IMR-90 (cell line): ENCODE measurements at regions of chr15 and their contacts with region 1.

Region 1: DNA sequence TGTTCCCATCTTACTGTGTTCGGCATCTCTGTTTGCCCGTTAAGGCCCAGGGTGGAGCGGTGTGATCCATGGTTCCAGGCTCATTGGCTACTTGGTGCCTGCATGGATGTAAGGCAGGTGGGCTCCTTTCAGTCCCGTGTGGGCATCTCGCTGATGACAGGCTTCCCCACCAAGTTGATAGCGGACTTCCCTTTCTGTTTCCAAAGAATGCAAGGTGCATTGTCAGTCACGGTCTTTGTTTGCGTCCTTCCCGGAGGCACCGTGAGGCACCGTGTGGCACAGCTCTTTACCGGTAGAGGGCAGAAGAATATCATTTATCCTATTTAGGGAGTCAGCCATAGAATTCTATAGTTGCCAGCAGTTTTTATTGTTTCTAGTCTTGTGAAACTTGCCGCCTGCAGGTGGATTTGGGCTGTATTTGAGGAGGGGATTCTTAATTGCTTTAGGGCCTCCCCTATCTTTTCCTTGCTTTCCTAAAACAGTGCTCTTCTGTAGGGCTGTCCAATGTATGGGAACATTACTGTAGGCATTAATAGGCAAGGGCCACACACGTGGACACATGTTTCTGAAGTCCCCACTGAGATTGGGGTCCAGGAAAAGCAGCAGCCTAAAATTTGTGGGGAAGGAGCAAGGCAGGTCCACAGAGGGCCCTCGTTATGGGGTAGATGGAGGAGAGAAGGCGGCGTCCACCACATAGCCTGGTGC is 244.1 kb downstream of the SLCO3A1 start:
- DNase-seq: peak; percentile 46
- ATAC-seq: peak; percentile 98
- H3K4me3 ChIP-seq: no peak overlapping the region
- H3K27ac ChIP-seq: no peak overlapping the region
- H3K4me1 ChIP-seq: no peaks in the 10 kb centered on the region
- H3K27me3 ChIP-seq: no peaks in the 10 kb centered on the region
- CTCF ChIP-seq: peak; percentile 86
- POLR2A ChIP-seq: no peak
- RAD21 ChIP-seq: peak; percentile 82

Region 2: GRCh38 chr15:92226014-92226612 is 128.5 kb after region 1 on chr15:
- CTCF ChIA-PET with region 1: no interaction called
- POLR2A ChIA-PET with region 1: no interaction called
- dilution Hi-C with region 1: no loop called
- in situ Hi-C with region 1: no loop called
- intact Hi-C with region 1: loop called (anchors 1 kb)
- DNase-seq: no peak
- ATAC-seq: no peak
- H3K4me3 ChIP-seq: no peak overlapping the region
- H3K27ac ChIP-seq: no peak overlapping the region
- H3K4me1 ChIP-seq: no peaks in the 10 kb centered on the region
- H3K27me3 ChIP-seq: no peaks in the 10 kb centered on the region
- CTCF ChIP-seq: 0 out of 2 replicates have a peak, but pooled peaks have one; percentile 14
- POLR2A ChIP-seq: no peak
- RAD21 ChIP-seq: no peak

Region 3: GRCh38 chr15:92383519-92384326 is 286.1 kb after region 1 on chr15:
- CTCF ChIA-PET with region 1: no interaction called
- POLR2A ChIA-PET with region 1: no interaction called
- dilution Hi-C with region 1: no loop called
- in situ Hi-C with region 1: loop called (anchors 5 kb)
- intact Hi-C with region 1: loop called (anchors 1 kb)
- DNase-seq: peak; percentile 3
- ATAC-seq: no peak
- H3K4me3 ChIP-seq: no peak overlapping the region
- H3K27ac ChIP-seq: no peak overlapping the region
- H3K4me1 ChIP-seq: no peaks in the 10 kb centered on the region
- H3K27me3 ChIP-seq: no peaks in the 10 kb centered on the region
- CTCF ChIP-seq: peak; percentile 44
- POLR2A ChIP-seq: no peak
- RAD21 ChIP-seq: peak; percentile 32